B cell (primary cell): ENCODE measurements at regions of chr5 and their contacts with region 1.

Region 1: GRCh38 chr5:141960449-141961202 is 2.6 kb upstream of the PCDH12 start:
- DNase-seq: peak; percentile 93
- ATAC-seq: peak; percentile 97
- H3K4me3 ChIP-seq: peak overlapping the region in 1 of 5 experiments; percentile 2
- H3K4me3 Mint-ChIP-seq: peak overlapping the region; percentile 29
- H3K27ac ChIP-seq: peak overlapping the region in 1 of 2 donors; percentile 18
- H3K27ac Mint-ChIP-seq: peak overlapping the region; percentile 73
- H3K4me1 ChIP-seq: peaks cover 10 to 25% of the 10 kb centered on the region in 2 donors
- H3K4me1 Mint-ChIP-seq: peaks cover 17% of the 10 kb centered on the region
- H3K27me3 ChIP-seq: no peaks in the 10 kb centered on the region
- H3K27me3 Mint-ChIP-seq: no peaks in the 10 kb centered on the region
- CTCF ChIP-seq: peak; percentile 80

Region 2: DNA sequence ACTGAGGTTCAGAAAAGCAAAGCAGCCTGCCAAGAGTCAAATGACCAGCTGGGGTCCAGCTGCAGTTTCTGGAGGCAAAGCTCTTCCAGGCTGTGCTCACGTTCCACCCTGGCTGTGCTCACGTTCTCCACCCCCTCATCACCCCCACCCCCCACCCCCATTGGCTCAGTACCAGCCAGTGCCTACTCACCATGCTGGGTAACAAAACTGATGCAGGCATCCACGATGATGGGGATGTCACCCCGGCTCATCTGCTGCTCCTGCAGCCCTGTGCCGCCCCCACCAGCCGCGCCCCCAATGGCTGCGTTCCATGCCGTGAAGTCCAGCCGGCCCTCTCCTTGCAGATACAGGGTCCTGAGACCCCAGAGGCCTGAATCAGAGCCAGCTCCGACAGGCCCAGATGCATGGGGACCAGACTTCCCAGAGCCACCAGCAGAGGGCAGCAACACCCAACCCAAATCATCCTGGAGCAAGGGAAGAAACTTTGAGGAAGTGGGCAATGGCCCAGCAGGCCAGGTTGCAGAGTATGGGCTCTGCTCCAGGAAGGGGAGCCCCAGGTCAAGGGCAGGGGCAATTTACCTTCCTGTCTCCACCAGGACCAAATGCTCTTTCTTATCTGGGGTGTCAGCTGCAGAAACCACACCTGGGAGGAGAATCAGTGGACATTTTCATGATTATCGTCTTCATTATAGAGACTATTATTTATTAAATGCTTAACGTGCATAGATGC is 295.7 kb before region 1 on chr5:
- CTCF ChIA-PET with region 1: interaction called, 35 read pairs
- POLR2A ChIA-PET with region 1: no interaction called
- intact Hi-C with region 1: loop called (anchors 1 kb)
- DNase-seq: peak; percentile 85
- ATAC-seq: peak; percentile 98
- H3K4me3 ChIP-seq: no peak overlapping the region
- H3K4me3 Mint-ChIP-seq: no peak overlapping the region
- H3K27ac ChIP-seq: no peak overlapping the region
- H3K27ac Mint-ChIP-seq: no peak overlapping the region
- H3K4me1 ChIP-seq: peaks cover 4 to 6% of the 10 kb centered on the region in 2 donors
- H3K4me1 Mint-ChIP-seq: peaks cover 4% of the 10 kb centered on the region
- H3K27me3 ChIP-seq: peaks cover 0 to 4% (median 0%) of the 10 kb centered on the region in 4 experiments
- H3K27me3 Mint-ChIP-seq: peaks cover 5% of the 10 kb centered on the region
- CTCF ChIP-seq: peak; percentile 91

Region 3: GRCh38 chr5:141701360-141702119 is 259.1 kb before region 1 on chr5:
- CTCF ChIA-PET with region 1: interaction called, 198 read pairs
- POLR2A ChIA-PET with region 1: no interaction called
- intact Hi-C with region 1: loop called (anchors 1 kb)
- DNase-seq: no peak
- ATAC-seq: peak; percentile 23
- H3K4me3 ChIP-seq: peak overlapping the region in 4 of 5 experiments; percentile 56 to 72 (median 63)
- H3K4me3 Mint-ChIP-seq: no peak overlapping the region
- H3K27ac ChIP-seq: no peak overlapping the region
- H3K27ac Mint-ChIP-seq: no peak overlapping the region
- H3K4me1 ChIP-seq: peaks cover 22 to 36% of the 10 kb centered on the region in 2 donors
- H3K4me1 Mint-ChIP-seq: peaks cover 23% of the 10 kb centered on the region
- H3K27me3 ChIP-seq: peaks cover 0 to 72% (median 58%) of the 10 kb centered on the region in 4 experiments
- H3K27me3 Mint-ChIP-seq: peaks cover 49% of the 10 kb centered on the region
- CTCF ChIP-seq: no peak

Region 4: DNA sequence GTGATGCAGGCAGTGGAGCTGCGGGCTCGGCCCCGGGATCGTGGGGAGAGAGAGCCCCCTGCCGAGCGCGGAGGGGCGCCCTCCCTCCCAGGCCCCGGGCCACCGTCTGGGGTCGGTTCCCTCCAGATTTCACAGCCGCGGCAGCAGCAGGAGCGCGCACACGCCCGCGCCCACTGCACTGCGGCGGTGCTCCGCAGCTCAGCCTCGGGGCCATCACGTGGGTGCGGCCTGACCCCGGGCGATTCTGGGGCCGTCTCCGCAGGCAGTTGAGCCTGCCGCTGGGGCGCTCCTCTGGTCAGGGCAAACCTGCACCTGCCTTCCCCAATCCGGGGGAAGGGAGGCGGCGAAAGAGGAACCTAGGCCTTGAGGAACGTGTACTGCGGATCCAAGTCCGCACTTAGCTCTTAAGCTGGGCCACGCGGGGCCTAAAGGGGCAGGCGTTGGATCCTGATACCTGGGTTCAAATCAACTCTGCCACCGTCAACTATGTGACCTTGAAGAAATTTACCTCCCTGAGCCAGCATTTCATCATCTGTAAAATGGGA is 46.4 kb before region 1 on chr5:
- CTCF ChIA-PET with region 1: interaction called, 16 read pairs
- POLR2A ChIA-PET with region 1: no interaction called
- intact Hi-C with region 1: no loop called
- DNase-seq: peak; percentile 70
- ATAC-seq: peak; percentile 90
- H3K4me3 ChIP-seq: peak overlapping the region; percentile 32 to 56 (median 50)
- H3K4me3 Mint-ChIP-seq: peak overlapping the region; percentile 66
- H3K27ac ChIP-seq: no peak overlapping the region
- H3K27ac Mint-ChIP-seq: no peak overlapping the region
- H3K4me1 ChIP-seq: peaks cover 24 to 32% of the 10 kb centered on the region in 2 donors
- H3K4me1 Mint-ChIP-seq: peaks cover 38% of the 10 kb centered on the region
- H3K27me3 ChIP-seq: peaks cover 0 to 5% (median 3%) of the 10 kb centered on the region in 4 experiments
- H3K27me3 Mint-ChIP-seq: peaks cover 8% of the 10 kb centered on the region
- CTCF ChIP-seq: peak; percentile 30

Region 5: GRCh38 chr5:141976176-141976575 is 15.6 kb after region 1 on chr5:
- CTCF ChIA-PET with region 1: interaction called, 13 read pairs
- POLR2A ChIA-PET with region 1: no interaction called
- intact Hi-C with region 1: no loop called
- DNase-seq: no peak
- ATAC-seq: no peak
- H3K4me3 ChIP-seq: no peak overlapping the region
- H3K4me3 Mint-ChIP-seq: no peak overlapping the region
- H3K27ac ChIP-seq: no peak overlapping the region
- H3K27ac Mint-ChIP-seq: no peak overlapping the region
- H3K4me1 ChIP-seq: no peaks in the 10 kb centered on the region
- H3K4me1 Mint-ChIP-seq: peaks cover 4% of the 10 kb centered on the region
- H3K27me3 ChIP-seq: no peaks in the 10 kb centered on the region
- H3K27me3 Mint-ChIP-seq: no peaks in the 10 kb centered on the region
- CTCF ChIP-seq: no peak

Region 6: DNA sequence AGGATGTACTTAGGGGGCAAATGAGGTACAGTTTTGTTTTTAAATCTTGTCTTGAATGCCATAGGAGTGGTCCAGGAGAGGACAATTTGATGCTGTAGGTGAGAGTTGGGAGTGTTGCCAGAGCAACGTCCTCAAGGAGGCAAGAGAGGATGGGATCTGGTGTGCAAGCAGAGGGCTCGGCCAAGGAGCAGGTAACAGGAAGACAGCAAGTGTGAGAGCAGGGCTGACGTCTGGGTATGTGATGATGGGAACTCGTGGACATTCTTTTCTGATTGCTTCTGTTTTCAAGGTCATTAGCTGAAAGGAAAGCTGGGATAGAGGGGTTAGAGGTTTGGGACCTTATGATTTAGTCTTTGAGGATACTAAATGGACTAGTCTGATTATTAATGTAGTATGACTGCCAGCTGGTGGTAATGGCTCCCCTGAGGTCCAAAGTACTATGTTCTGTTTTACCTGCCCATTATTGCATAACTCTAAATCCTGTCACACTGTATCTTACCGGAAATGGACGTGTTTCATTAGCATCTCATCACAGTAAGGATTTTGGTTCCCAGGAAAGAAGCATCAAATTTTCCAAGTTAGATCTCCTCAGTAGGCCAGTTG is 36.8 kb after region 1 on chr5:
- CTCF ChIA-PET with region 1: no interaction called
- POLR2A ChIA-PET with region 1: no interaction called
- intact Hi-C with region 1: no loop called
- DNase-seq: no peak
- ATAC-seq: no peak
- H3K4me3 ChIP-seq: no peak overlapping the region
- H3K4me3 Mint-ChIP-seq: no peak overlapping the region
- H3K27ac ChIP-seq: no peak overlapping the region
- H3K27ac Mint-ChIP-seq: no peak overlapping the region
- H3K4me1 ChIP-seq: no peaks in the 10 kb centered on the region
- H3K4me1 Mint-ChIP-seq: no peaks in the 10 kb centered on the region
- H3K27me3 ChIP-seq: no peaks in the 10 kb centered on the region
- H3K27me3 Mint-ChIP-seq: no peaks in the 10 kb centered on the region
- CTCF ChIP-seq: no peak